Right ventricle myocardium superior (tissue), 1 donor: ENCODE measurements at regions of chr9 and their contacts with region 1.

Region 1: GRCh38 chr9:96856363-96857286 is 2.3 kb upstream of the ZNF782 start:
- DNase-seq: peak; percentile 66
- ATAC-seq: peak; percentile 65

Region 2: GRCh38 chr9:96777426-96777864 is 79.2 kb before region 1 on chr9:
- intact Hi-C with region 1: no loop called
- DNase-seq: no peak
- ATAC-seq: no peak

Region 3: GRCh38 chr9:97109194-97109811 is 252.7 kb after region 1 on chr9:
- intact Hi-C with region 1: loop called (anchors 1 kb)
- DNase-seq: no peak
- ATAC-seq: peak; percentile 69

Region 4: DNA sequence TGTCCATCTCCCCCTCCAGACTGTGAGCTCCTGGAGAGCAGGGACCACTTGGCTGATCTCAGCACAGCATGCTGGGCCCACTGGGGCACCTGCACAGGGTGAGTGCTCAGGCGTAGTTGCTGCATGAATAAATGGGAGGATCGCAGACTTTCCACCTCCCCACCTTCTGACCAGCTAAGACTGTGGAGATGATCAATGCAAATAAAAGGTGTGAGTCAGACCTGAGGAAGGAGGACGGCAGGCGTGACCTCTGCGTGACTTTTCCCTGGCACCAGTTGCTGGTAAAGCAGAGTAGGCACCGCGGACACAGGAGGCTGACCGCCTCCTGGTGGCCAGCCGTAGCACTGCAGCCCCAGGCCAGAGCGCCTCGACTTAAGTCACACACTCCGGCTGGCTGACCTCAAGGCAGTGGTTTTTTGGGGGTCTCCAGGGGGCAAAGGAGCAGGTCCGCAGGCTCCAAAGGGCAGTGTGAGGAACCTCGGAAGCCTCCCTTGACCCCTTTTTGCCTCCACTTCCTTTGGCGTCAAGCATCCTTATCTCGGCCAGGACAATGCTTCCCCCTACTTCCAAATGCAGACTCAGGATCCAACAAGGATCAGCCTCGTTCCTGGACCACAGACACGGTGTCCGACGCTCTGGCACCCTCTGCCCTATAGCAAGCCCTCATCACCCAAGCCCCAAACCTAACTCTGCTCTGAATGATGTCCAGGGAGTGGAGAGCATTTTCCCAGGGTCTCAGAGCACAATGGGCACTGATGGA is 542.6 kb after region 1 on chr9:
- intact Hi-C with region 1: loop called (anchors 5 kb)
- DNase-seq: peak; percentile 85
- ATAC-seq: peak; percentile 93